H1 (cell line): ENCODE measurements at regions of chr17 and their contacts with region 1.

Region 1: GRCh38 chr17:73551759-73552158 is 92.5 kb downstream of the SDK2 start:
- DNase-seq: no peak
- H3K4me3 ChIP-seq: no peak overlapping the region
- H3K27ac ChIP-seq: no peak overlapping the region
- H3K4me1 ChIP-seq: peaks cover 0 to 25% (median 14%) of the 10 kb centered on the region in 4 experiments; a peak in 6 of 7 replicates
- H3K27me3 ChIP-seq: no peaks in the 10 kb centered on the region; a peak in 1 of 7 replicates
- CTCF ChIP-seq: no peak
- EP300 ChIP-seq: no peak
- POLR2A ChIP-seq: no peak
- RAD21 ChIP-seq: no peak

Region 2: GRCh38 chr17:73510981-73511718 is 40.6 kb before region 1 on chr17:
- CTCF ChIA-PET with region 1: no interaction called
- POLR2A ChIA-PET with region 1: no interaction called
- DNase-seq: no peak
- H3K4me3 ChIP-seq: no peak overlapping the region
- H3K27ac ChIP-seq: no peak overlapping the region
- H3K4me1 ChIP-seq: peaks cover 0 to 4% (median 0%) of the 10 kb centered on the region in 4 experiments; a peak in 2 of 7 replicates
- H3K27me3 ChIP-seq: no peaks in the 10 kb centered on the region; a peak in 3 of 7 replicates
- CTCF ChIP-seq: no peak
- EP300 ChIP-seq: no peak
- POLR2A ChIP-seq: no peak
- RAD21 ChIP-seq: no peak

Region 3: GRCh38 chr17:73566905-73567782 is 15.4 kb after region 1 on chr17:
- CTCF ChIA-PET with region 1: interaction called, 24 read pairs
- POLR2A ChIA-PET with region 1: interaction called, 10 read pairs
- DNase-seq: peak; percentile 43 to 70
- H3K4me3 ChIP-seq: peak overlapping the region in 1 of 4 experiments; percentile 41; a peak in 2 of 8 replicates
- H3K27ac ChIP-seq: peak overlapping the region; percentile 79
- H3K4me1 ChIP-seq: peaks cover 13 to 39% (median 22%) of the 10 kb centered on the region in 4 experiments
- H3K27me3 ChIP-seq: no peaks in the 10 kb centered on the region
- CTCF ChIP-seq: no peak; a peak in 1 of 4 replicates
- EP300 ChIP-seq: no peak; a peak in 1 of 3 replicates
- POLR2A ChIP-seq: no peak
- RAD21 ChIP-seq: peak; percentile 14 to 45; a peak in 3 of 4 replicates

Region 4: DNA sequence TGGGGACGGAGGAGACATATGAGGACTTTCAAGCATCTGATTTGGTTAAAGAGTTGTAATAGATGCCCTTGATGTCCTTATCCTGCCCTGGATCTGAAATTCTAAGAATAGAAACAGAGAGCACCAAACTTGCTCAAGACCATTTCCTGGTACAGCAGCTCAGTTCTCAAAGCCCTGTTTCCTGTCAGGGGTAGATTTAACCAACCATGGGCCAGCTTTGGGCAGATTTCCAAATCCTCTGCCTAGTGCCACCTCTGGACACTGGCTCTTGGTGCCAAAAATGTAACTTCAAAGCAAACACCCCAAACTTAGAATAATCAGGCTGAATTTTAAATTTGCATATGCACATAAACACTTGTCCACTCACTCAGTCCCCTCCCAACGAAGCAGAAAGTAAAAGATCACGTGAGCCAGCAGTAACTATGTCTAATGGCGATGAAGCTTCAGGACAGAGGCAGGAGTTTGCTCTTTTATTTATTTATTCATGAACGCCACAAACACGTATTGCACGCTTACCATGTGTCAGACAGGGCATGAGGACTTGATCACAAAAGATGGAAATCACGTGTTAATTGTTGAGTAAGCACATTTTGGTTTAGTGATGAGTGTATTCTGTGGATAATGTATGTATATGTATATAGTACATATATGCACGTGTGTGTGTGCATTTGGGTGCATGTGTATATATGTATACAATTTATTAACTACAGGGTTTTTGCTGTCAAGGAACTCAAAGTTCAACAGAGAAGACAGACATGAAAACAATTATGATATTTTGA is 115.6 kb after region 1 on chr17:
- CTCF ChIA-PET with region 1: no interaction called
- POLR2A ChIA-PET with region 1: no interaction called
- DNase-seq: no peak
- H3K4me3 ChIP-seq: no peak overlapping the region
- H3K27ac ChIP-seq: no peak overlapping the region
- H3K4me1 ChIP-seq: no peaks in the 10 kb centered on the region; a peak in 1 of 7 replicates
- H3K27me3 ChIP-seq: no peaks in the 10 kb centered on the region
- CTCF ChIP-seq: no peak
- EP300 ChIP-seq: no peak
- POLR2A ChIP-seq: no peak
- RAD21 ChIP-seq: no peak

Region 5: DNA sequence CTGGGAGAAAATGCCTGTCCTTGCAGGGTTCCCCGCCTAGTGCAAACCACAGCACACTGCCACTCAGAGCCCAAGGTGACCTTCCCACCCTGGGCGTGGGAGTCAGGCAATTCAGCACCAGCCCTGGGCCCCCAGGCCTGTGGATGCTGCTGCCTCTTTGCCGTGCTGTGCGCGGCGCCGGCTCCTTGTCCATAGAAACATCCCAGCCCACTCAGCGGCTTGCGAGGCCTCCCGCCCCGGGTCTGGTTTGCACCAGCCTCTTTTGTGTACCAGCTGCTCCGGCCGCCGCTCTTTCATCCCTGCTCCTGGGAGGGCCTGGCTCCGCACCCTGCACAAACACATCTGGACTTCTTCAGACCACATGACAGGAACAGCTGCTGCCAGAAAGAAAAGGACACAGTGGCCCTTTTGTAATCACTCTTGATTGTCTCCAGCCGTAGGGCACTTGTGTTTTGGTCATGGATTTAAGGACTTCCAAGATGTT is 167.9 kb after region 1 on chr17:
- CTCF ChIA-PET with region 1: no interaction called
- POLR2A ChIA-PET with region 1: no interaction called
- DNase-seq: no peak
- H3K4me3 ChIP-seq: no peak overlapping the region
- H3K27ac ChIP-seq: no peak overlapping the region
- H3K4me1 ChIP-seq: peaks cover 0 to 7% (median 2%) of the 10 kb centered on the region in 4 experiments; a peak in 5 of 7 replicates
- H3K27me3 ChIP-seq: peaks cover 0 to 2% (median 0%) of the 10 kb centered on the region in 4 experiments; a peak in 2 of 7 replicates
- CTCF ChIP-seq: no peak
- EP300 ChIP-seq: no peak
- POLR2A ChIP-seq: no peak
- RAD21 ChIP-seq: no peak